ENCODE measurements at regions of chr9 and their contacts with region 1.

Region 1: DNA sequence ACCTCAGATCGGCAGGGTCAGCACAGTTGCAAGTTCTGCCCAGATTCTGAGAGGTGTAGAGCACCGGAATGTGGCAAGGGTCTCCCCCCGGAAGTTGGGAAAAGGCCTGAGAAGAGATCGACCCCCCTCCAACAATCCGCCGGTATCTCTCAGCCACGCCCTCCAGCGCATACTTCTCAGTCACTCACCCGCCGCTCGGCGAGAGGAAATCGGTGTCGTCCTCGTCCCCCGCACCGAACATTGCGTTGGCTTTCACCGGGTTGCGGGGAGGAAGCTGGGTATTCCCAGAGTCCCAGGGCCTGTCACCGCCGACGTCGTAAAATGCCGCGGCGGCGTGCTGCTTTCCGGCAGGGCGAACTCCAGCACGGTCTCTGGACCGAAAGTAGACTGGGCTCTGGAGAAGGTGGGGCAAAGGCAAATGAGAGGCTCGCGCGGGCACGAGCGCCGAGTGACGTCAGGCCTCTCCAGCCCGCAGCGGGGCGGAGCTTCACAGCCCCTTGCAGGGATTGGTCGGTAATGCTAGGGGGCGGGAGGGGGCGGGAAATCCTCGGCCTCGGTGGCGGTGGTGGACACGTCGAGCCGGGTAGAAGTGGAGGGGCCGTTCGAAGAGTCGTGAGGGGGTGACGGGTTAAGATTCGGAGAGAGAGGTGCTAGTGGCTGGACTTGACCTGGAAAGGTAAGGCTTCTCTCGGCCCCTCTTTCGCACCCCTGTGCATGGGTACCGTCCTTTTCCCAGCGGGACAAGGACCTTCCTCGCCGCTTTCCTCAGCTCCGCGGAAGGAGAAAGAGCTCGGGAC is at the starts of genes FKBP15 and SLC31A1:
- DNase-seq: peak; percentile 98
- ATAC-seq: peak; percentile 95
- H3K4me3 Mint-ChIP-seq: peak within 1 kb of the TSS; percentile 88
- H3K27ac Mint-ChIP-seq: peak within 1 kb of the TSS; percentile 93
- H3K4me1 Mint-ChIP-seq: peaks cover 53% of the 10 kb centered on the region
- H3K27me3 Mint-ChIP-seq: no peaks in the 10 kb centered on the region
- total RNA-seq, gene FKBP15: 40.4 to 42.8 TPM
- total RNA-seq, gene SLC31A1: 8.7 to 12.2 TPM

Region 2: DNA sequence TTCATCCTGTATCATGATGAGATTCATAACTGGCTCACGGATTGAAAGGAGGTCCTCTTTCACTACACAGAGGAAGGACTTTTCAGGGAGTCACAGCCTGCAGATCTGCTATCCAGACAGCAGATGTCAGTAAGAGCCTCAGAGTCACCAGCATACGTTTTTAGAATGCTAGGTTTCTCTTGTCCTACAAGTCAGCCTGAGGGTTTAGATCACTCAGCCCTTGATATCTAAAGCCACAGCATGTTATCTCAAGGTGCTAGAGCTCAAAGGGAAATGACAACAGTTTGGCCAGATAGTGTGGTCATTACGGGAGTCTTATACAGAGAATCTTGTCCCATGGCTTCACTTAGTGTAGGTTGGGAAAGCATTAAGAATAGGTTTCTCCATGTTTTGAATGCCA is 299.7 kb before region 1 on chr9:
- CTCF ChIA-PET with region 1: no interaction called
- DNase-seq: no peak
- ATAC-seq: no peak
- H3K4me3 Mint-ChIP-seq: no peak overlapping the region
- H3K27ac Mint-ChIP-seq: no peak overlapping the region
- H3K4me1 Mint-ChIP-seq: peaks cover 2% of the 10 kb centered on the region
- H3K27me3 Mint-ChIP-seq: peaks cover 49% of the 10 kb centered on the region

Region 3: GRCh38 chr9:113042884-113043657 is 178.1 kb before region 1 on chr9:
- CTCF ChIA-PET with region 1: no interaction called
- DNase-seq: no peak
- ATAC-seq: no peak
- H3K4me3 Mint-ChIP-seq: no peak overlapping the region
- H3K27ac Mint-ChIP-seq: no peak overlapping the region
- H3K4me1 Mint-ChIP-seq: no peaks in the 10 kb centered on the region
- H3K27me3 Mint-ChIP-seq: no peaks in the 10 kb centered on the region

Region 4: DNA sequence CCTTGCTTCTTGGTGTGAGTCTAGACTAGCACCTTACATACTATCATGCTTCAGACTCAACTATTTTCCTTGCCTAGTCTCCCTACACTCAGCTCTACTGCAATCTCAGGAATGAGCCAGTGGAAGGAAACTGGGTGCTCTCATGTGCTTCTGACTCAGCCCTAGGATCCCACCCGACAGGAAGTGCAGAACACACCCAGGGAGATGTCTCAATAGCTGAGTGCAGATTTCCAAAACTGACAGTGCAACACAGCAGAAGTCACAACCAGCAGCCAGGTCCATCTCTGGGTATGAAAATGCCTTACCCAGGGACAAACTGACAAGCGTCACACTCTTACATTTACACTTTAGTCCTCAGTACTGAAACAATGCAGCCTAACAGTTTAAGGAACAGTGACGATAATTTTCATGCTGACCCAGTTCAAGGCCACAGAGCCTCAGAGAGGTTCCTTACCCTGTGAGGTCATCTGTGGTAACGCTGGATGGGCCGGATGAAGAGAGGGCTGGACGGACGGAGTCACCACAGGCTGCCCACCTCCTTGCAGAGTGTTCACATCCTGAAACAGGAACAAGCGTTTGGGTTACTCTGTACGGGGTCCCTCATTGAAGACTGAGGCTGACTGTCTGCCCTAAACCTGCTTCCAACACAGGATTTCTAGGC is 33.1 kb before region 1 on chr9:
- CTCF ChIA-PET with region 1: no interaction called
- DNase-seq: no peak
- ATAC-seq: no peak
- H3K4me3 Mint-ChIP-seq: no peak overlapping the region
- H3K27ac Mint-ChIP-seq: peak overlapping the region; percentile 52
- H3K4me1 Mint-ChIP-seq: peaks cover 7% of the 10 kb centered on the region
- H3K27me3 Mint-ChIP-seq: no peaks in the 10 kb centered on the region

Region 5: GRCh38 chr9:113231701-113232100 is 10.5 kb after region 1 on chr9:
- CTCF ChIA-PET with region 1: interaction called, 13 read pairs
- DNase-seq: no peak
- ATAC-seq: no peak
- H3K4me3 Mint-ChIP-seq: no peak overlapping the region
- H3K27ac Mint-ChIP-seq: no peak overlapping the region
- H3K4me1 Mint-ChIP-seq: peaks cover 25% of the 10 kb centered on the region
- H3K27me3 Mint-ChIP-seq: no peaks in the 10 kb centered on the region

Measured in activated CD8-positive, alpha-beta memory T cell treated with anti-CD3 and anti-CD28 coated beads, Interleukin-2, amount 10 ng/mL, durations not matched to agents 7 days and 5 days (primary cell).